CD8-positive, alpha-beta memory T cell (primary cell): ENCODE measurements at regions of chr12 and their contacts with region 1.

Region 1: GRCh38 chr12:3299929-3300832 is 190.8 kb upstream of the PRMT8 start:
- DNase-seq: peak; percentile 51 to 80 (median 61)
- H3K4me3 ChIP-seq: peak overlapping the region; percentile 54
- H3K4me3 Mint-ChIP-seq: peak overlapping the region in 6 of 7 donors; percentile 69 to 88 (median 75)
- H3K27ac ChIP-seq: no peak overlapping the region
- H3K27ac Mint-ChIP-seq: peak overlapping the region in 3 of 8 donors; percentile 25 to 78 (median 43)
- H3K4me1 ChIP-seq: peaks cover 6% of the 10 kb centered on the region
- H3K4me1 Mint-ChIP-seq: peaks cover 11 to 12% (median 12%) of the 10 kb centered on the region in 3 donors
- H3K27me3 ChIP-seq: peaks cover 3% of the 10 kb centered on the region
- H3K27me3 Mint-ChIP-seq: peaks cover 11 to 30% of the 10 kb centered on the region in 2 donors

Region 2: GRCh38 chr12:3004655-3005565 is 295.3 kb before region 1 on chr12:
- CTCF ChIA-PET with region 1: no interaction called
- POLR2A ChIA-PET with region 1: no interaction called
- DNase-seq: no peak
- H3K4me3 ChIP-seq: no peak overlapping the region
- H3K4me3 Mint-ChIP-seq: no peak overlapping the region
- H3K27ac ChIP-seq: no peak overlapping the region
- H3K27ac Mint-ChIP-seq: no peak overlapping the region
- H3K4me1 ChIP-seq: no peaks in the 10 kb centered on the region
- H3K4me1 Mint-ChIP-seq: no peaks in the 10 kb centered on the region
- H3K27me3 ChIP-seq: no peaks in the 10 kb centered on the region
- H3K27me3 Mint-ChIP-seq: peaks cover 4 to 12% of the 10 kb centered on the region in 2 donors

Region 3: DNA sequence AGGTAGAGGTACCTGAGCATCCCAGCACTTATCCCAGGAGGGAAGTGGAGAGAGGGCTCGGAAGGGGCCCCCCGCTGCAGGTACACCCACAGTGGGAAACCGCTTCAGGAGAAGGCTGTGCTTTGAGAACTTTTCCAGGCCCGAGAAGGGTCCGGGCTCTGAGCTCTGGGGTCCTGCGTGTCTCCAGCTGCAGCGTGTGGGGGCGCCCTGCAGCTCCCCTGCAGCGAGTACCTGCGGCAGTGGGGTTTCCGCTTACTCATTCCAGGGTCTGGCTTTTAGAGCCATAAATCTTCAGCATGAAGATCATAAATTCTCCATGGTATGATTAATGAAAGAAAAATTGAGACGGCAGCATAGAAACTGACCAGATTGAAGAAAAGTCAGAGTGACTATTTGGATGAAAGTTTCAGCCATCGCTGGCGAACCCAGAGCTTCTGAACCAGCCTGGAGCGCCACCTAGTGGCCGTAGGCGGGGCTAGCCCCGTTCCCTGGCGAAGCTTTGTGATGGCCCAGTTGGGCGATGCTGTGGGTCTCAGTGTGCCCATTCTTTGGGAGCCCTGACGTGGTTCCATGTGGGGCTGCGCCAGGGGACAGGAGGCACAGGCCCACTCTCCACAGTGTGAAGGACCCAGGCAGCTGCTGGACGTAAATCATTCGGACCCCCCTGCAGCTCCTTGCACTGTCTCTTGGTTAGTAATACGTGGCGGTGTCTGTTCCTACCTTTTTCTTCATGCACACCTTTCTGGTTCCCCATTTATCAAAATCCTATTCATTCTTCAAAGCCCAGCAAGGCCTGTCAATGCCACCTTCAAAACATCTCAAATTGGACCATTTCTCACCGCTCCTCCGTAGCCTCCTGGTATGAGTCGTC is 24.8 kb before region 1 on chr12:
- CTCF ChIA-PET with region 1: interaction called, 18 read pairs
- POLR2A ChIA-PET with region 1: no interaction called
- DNase-seq: peak; percentile 42 to 71 (median 47)
- H3K4me3 ChIP-seq: no peak overlapping the region
- H3K4me3 Mint-ChIP-seq: peak overlapping the region in 3 of 7 donors; percentile 11 to 34 (median 23)
- H3K27ac ChIP-seq: no peak overlapping the region
- H3K27ac Mint-ChIP-seq: no peak overlapping the region
- H3K4me1 ChIP-seq: no peaks in the 10 kb centered on the region
- H3K4me1 Mint-ChIP-seq: peaks cover 0 to 6% (median 0%) of the 10 kb centered on the region in 3 donors
- H3K27me3 ChIP-seq: no peaks in the 10 kb centered on the region
- H3K27me3 Mint-ChIP-seq: peaks cover 10 to 44% of the 10 kb centered on the region in 2 donors

Region 4: GRCh38 chr12:3313675-3314663 is 13.8 kb after region 1 on chr12:
- CTCF ChIA-PET with region 1: interaction called, 28 read pairs
- POLR2A ChIA-PET with region 1: no interaction called
- DNase-seq: no peak
- H3K4me3 ChIP-seq: no peak overlapping the region
- H3K4me3 Mint-ChIP-seq: no peak overlapping the region
- H3K27ac ChIP-seq: no peak overlapping the region
- H3K27ac Mint-ChIP-seq: no peak overlapping the region
- H3K4me1 ChIP-seq: no peaks in the 10 kb centered on the region
- H3K4me1 Mint-ChIP-seq: no peaks in the 10 kb centered on the region
- H3K27me3 ChIP-seq: no peaks in the 10 kb centered on the region
- H3K27me3 Mint-ChIP-seq: peaks cover 2 to 25% of the 10 kb centered on the region in 2 donors

Region 5: DNA sequence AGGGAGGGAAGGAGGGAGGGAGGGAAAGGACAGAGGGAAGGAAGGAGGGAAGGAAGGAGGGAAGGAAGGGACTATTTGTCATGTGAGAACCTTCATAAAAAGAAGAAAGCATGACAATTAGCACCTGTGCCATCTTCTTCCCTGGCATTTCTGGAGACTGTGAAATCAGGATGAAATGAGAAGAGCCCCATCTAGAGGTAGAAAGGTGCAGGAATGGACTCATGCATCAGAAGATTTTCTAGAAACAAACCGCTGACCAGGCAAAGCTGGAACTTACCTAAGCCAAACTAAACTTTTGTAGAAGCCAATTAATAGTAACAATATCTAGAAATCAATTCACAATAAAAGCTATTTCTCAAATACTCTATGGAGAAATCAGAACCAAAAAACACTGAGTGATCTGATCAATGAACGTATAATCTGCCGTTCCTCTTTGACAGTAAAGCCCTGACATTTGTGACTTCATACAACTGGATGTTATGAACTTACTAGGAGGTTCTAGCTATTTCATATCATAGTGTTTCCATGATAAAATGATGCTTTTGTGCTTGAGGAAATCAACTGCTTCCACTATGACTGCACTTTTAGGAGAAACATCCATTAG is 477.1 kb after region 1 on chr12:
- CTCF ChIA-PET with region 1: interaction called, 23 read pairs
- POLR2A ChIA-PET with region 1: no interaction called
- DNase-seq: peak in 2 of 5 donors; percentile 17 to 30
- H3K4me3 ChIP-seq: no peak overlapping the region
- H3K4me3 Mint-ChIP-seq: no peak overlapping the region
- H3K27ac ChIP-seq: no peak overlapping the region
- H3K27ac Mint-ChIP-seq: no peak overlapping the region
- H3K4me1 ChIP-seq: no peaks in the 10 kb centered on the region
- H3K4me1 Mint-ChIP-seq: peaks cover 3 to 4% (median 4%) of the 10 kb centered on the region in 3 donors
- H3K27me3 ChIP-seq: no peaks in the 10 kb centered on the region
- H3K27me3 Mint-ChIP-seq: peaks cover 0 to 2% of the 10 kb centered on the region in 2 donors

Region 6: GRCh38 chr12:3803865-3804472 is 503.8 kb after region 1 on chr12:
- CTCF ChIA-PET with region 1: interaction called, 120 read pairs
- POLR2A ChIA-PET with region 1: interaction called, 3 read pairs
- DNase-seq: peak; percentile 40 to 78 (median 52)
- H3K4me3 ChIP-seq: no peak overlapping the region
- H3K4me3 Mint-ChIP-seq: no peak overlapping the region
- H3K27ac ChIP-seq: no peak overlapping the region
- H3K27ac Mint-ChIP-seq: no peak overlapping the region
- H3K4me1 ChIP-seq: no peaks in the 10 kb centered on the region
- H3K4me1 Mint-ChIP-seq: no peaks in the 10 kb centered on the region
- H3K27me3 ChIP-seq: no peaks in the 10 kb centered on the region
- H3K27me3 Mint-ChIP-seq: peaks cover 0 to 3% of the 10 kb centered on the region in 2 donors